Dendritic cell treated with granulocyte-macrophage colony-stimulating factor and Interleukin-4, amounts not matched to agents 40 ng/mL and 50 ng/mL, for 4 days (primary cell): ENCODE measurements at regions of chr5 and their contacts with region 1.

Region 1: GRCh38 chr5:41856644-41857491 is 13.4 kb downstream of the OXCT1 start:
- H3K4me3 Mint-ChIP-seq: no peak overlapping the region
- H3K27ac Mint-ChIP-seq: no peak overlapping the region
- H3K4me1 Mint-ChIP-seq: no peaks in the 10 kb centered on the region
- H3K27me3 Mint-ChIP-seq: no peaks in the 10 kb centered on the region

Region 2: DNA sequence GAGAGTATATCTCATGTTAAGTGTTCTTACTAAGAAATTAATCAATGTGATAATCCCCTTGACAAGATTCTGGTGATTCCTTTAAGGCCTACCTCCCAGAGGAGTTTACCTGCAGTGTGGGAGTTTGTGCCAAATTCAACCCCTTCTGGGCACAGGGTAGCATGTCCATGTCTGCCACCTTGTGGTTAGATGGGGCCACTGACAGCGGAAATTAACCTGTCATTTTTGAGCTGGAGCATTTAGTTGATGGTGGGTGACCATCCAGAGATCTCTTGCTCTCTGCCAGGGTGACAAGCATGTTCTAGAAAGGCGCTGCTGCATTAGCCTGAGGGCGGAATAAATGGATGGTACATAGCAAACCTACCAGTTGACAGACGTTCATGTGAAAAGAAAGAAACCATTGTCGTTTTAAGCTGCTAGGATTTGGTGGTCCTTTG is 200.4 kb after region 1 on chr5:
- intact Hi-C with region 1: loop called (anchors 1 kb)
- H3K4me3 Mint-ChIP-seq: no peak overlapping the region
- H3K27ac Mint-ChIP-seq: no peak overlapping the region
- H3K4me1 Mint-ChIP-seq: no peaks in the 10 kb centered on the region
- H3K27me3 Mint-ChIP-seq: no peaks in the 10 kb centered on the region

Region 3: GRCh38 chr5:42583322-42583721 is 726.5 kb after region 1 on chr5:
- intact Hi-C with region 1: loop called (anchors 2 kb)
- H3K4me3 Mint-ChIP-seq: no peak overlapping the region
- H3K27ac Mint-ChIP-seq: no peak overlapping the region
- H3K4me1 Mint-ChIP-seq: peaks cover 12% of the 10 kb centered on the region
- H3K27me3 Mint-ChIP-seq: peaks cover 1% of the 10 kb centered on the region